ENCODE measurements at regions of chr2 and their contacts with region 1.

Region 1: GRCh38 chr2:32063310-32064161 is at the start of gene SPAST:
- DNase-seq: peak; percentile 91 to 98 (median 96)
- H3K4me3 ChIP-seq: peak within 1 kb of the TSS; percentile 59 to 100 (median 94)
- H3K27ac ChIP-seq: peak within 1 kb of the TSS; percentile 61 to 99 (median 96)
- H3K27me3 ChIP-seq: no peaks in the 10 kb centered on the region
- CTCF ChIP-seq: peak in 53 of 56 donors; percentile 32 to 79 (median 59)
- total RNA-seq, gene SPAST: 26.1 to 44.9 (median 35.9) TPM

Region 2: DNA sequence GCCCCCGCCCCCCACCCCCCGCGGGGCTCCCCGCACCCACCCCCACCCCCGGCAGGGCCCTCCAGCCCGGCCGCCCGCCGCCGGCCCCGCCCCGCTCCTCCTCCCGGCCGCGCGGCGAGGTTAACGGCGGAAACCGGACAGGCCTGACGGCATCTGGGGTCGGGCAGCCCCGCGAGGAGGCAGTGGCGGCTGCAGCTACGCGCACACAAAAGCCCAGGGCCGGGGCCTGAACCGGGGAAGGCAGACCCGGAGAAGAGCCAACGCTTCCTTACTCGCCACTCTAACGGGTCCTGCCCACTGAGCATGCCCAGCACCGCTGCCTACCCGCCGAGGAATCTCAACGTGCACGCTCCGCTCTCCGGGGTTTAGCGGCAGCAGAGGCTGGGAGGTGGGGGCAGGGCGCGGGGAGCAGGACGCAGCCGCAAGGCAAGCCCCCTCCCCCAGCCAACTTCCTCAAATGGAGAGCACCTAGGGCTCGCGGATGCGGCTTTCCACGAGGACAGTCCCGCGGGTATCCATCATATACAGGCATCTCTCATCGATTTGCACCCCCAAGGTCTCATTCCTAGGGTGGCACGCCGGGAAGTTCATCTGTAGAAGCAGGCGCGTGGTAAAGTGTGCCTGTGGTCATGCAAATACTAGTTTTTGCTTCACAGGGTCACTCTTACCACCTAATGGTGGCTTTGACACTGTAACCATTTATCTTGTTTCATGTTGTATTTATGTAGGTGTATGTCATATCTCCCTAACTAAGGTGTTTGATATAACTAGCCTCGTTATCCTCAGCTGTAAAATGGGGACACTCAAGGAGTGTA is 52.7 kb before region 1 on chr2 and contains the start of gene MEMO1:
- intact Hi-C with region 1: loop called (anchors 1 to 2 kb)
- DNase-seq: peak; percentile 84 to 93 (median 90)
- H3K4me3 ChIP-seq: peak within 1 kb of the TSS; percentile 54 to 97 (median 85)
- H3K27ac ChIP-seq: peak within 1 kb of the TSS; percentile 18 to 97 (median 94)
- H3K27me3 ChIP-seq: no peaks in the 10 kb centered on the region
- CTCF ChIP-seq: peak in 6 of 56 donors; percentile 8 to 25 (median 15)
- total RNA-seq, gene MEMO1: 35.6 to 60.5 (median 46.8) TPM

Region 3: DNA sequence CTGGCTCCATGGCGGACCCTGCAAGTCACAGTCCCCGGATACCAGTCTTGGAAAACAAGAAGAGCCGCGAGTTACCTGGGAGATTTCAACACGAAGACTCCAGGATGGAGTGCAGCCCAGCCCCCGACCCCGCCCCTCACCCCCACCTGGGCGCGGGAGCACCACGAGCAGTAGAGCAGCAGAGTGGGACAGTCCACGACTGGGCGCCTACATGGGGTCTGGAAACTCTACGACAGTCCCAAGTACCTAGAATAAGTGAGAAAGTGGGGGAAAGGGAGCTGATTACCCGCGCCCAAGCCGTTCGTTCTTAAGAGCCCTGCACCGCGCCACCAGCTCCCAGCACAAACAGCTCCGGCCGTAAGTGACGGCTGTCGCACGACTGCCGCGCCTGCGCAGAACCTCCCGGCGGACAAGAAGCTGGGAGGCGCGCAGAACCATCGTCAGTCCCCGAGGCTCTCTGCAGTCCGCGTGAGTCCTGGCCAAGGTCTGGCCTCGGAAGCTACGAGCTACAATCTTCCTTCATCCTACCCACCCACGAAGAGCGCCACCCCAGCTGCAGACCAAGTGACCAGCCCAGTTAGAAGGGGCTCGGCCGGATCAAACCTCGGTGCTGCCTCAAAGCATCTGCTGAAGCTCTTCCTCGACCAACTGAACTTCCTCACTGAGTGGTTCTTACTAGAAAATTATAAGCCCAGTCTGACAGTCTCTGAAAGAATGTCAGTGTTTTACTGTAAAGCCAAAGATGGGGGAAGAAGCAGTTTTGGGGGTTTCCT is 23.9 kb before region 1 on chr2 and contains the start of gene DPY30:
- intact Hi-C with region 1: loop called (anchors 1 kb)
- DNase-seq: peak; percentile 86 to 95 (median 92)
- H3K4me3 ChIP-seq: peak within 1 kb of the TSS; percentile 57 to 98 (median 88)
- H3K27ac ChIP-seq: peak within 1 kb of the TSS; percentile 42 to 96 (median 87)
- H3K27me3 ChIP-seq: no peaks in the 10 kb centered on the region
- CTCF ChIP-seq: peak in 52 of 56 donors; percentile 2 to 65 (median 32)
- total RNA-seq, gene DPY30: 36.9 to 75.5 (median 60.6) TPM

Region 4: DNA sequence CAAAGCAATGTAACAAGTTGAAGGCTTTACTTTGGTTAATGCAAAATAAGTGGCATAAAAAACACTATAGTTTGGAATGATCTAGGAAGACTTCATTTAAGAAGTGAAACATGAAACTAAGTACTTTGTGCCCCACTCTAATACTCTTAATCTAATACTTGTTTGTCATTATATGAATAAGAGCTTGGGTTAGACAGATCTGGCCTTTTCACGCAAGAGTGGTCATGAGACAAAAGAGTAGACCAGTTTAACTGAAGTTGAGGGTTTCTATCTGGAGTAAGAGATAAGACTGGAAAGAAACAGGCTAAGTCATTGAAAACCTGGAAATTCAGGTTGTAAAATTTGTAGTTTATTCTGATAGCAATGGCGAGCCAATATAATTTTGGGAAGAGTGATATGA is 105.0 kb after region 1 on chr2:
- intact Hi-C with region 1: loop called (anchors 5 kb)
- DNase-seq: no peak
- H3K4me3 ChIP-seq: no peak overlapping the region
- H3K27ac ChIP-seq: no peak overlapping the region
- H3K27me3 ChIP-seq: no peaks in the 10 kb centered on the region
- CTCF ChIP-seq: no peak

Region 5: GRCh38 chr2:32277674-32278482 is 214.3 kb after region 1 on chr2 and contains the start of gene YIPF4:
- intact Hi-C with region 1: loop called in 1 of 2 experiments (anchors 10 kb)
- DNase-seq: peak; percentile 74 to 93 (median 86)
- H3K4me3 ChIP-seq: peak within 1 kb of the TSS; percentile 68 to 100 (median 96)
- H3K27ac ChIP-seq: peak within 1 kb of the TSS; percentile 63 to 94 (median 84)
- H3K27me3 ChIP-seq: peaks cover 0 to 8% (median 0%) of the 10 kb centered on the region in 45 donors
- CTCF ChIP-seq: peak in 6 of 56 donors; percentile 4 to 17 (median 7)
- total RNA-seq, gene YIPF4: 30.3 to 73.0 (median 46.0) TPM

Region 6: GRCh38 chr2:32356735-32357644 is 293.5 kb after region 1 on chr2 and contains the start of gene BIRC6:
- intact Hi-C with region 1: loop called (anchors 2 to 5 kb)
- DNase-seq: peak; percentile 96 to 100 (median 98)
- H3K4me3 ChIP-seq: peak within 1 kb of the TSS; percentile 73 to 100 (median 98)
- H3K27ac ChIP-seq: peak within 1 kb of the TSS; percentile 68 to 98 (median 94)
- H3K27me3 ChIP-seq: no peaks in the 10 kb centered on the region
- CTCF ChIP-seq: peak in 28 of 56 donors; percentile 4 to 50 (median 27)
- total RNA-seq, gene BIRC6: 104 to 180 (median 140) TPM